MCF 10A (cell line): ENCODE measurements at regions of chr6 and their contacts with region 1.

Region 1: GRCh38 chr6:35731736-35732532 is 4.9 kb upstream of the ARMC12 start:
- DNase-seq: peak; percentile 97
- H3K4me3 Mint-ChIP-seq: peak overlapping the region; percentile 73
- H3K27ac Mint-ChIP-seq: peak overlapping the region; percentile 81
- H3K4me1 Mint-ChIP-seq: peaks cover 55% of the 10 kb centered on the region
- H3K27me3 Mint-ChIP-seq: no peaks in the 10 kb centered on the region
- CTCF ChIP-seq: no peak

Region 2: DNA sequence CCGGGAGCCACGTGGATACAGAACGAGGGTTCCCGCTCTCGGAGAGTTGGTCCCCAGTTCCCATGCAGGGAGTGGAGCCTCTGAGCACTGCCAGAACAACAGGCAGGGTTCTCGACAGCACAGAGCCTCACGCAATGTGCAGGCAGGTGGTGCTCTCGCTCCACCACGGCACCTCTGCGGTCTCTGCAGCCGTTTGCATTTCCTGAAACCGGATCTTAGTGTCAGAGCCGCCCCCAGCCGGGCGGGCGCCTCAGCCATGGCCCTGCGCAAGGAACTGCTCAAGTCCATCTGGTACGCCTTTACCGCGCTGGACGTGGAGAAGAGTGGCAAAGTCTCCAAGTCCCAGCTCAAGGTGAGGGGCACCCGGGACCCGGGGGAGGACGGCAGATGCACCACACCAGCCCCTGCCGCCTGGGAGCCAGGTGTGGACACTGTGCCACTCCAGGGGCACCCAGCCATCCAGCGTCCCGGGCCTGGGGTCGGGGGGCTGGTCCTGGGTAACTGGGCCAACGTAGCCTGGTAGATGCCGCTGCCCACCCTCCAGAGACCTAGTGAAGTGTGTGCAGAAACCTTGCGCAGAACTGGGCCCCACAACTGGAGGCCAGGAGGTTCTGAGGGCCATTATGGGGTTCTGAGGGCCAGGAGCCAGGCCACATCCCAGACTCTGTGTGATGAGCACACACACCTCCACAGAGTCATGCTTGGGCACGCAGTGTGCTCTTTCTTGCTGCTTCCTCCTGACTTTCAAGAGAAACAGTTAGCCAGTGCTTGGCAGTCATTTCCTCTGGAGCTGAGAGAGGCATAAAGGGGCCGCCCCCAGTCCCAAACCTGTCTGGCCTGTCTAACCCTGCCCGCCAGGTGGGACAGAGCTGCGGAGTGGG is 434.1 kb before region 1 on chr6 and contains the start of gene DEF6:
- CTCF ChIA-PET with region 1: interaction called, 4 read pairs
- POLR2A ChIA-PET with region 1: no interaction called
- intact Hi-C with region 1: loop called (anchors 2 kb)
- DNase-seq: peak; percentile 91
- H3K4me3 Mint-ChIP-seq: peak within 1 kb of the TSS; percentile 69
- H3K27ac Mint-ChIP-seq: peak within 1 kb of the TSS; percentile 23
- H3K4me1 Mint-ChIP-seq: peaks cover 14% of the 10 kb centered on the region
- H3K27me3 Mint-ChIP-seq: no peaks in the 10 kb centered on the region
- CTCF ChIP-seq: peak; percentile 85
- total RNA-seq, gene DEF6: 17.8 and 23.1 TPM in 2 replicates

Region 3: GRCh38 chr6:35569011-35569461 is 162.9 kb before region 1 on chr6:
- CTCF ChIA-PET with region 1: interaction called, 12 read pairs
- POLR2A ChIA-PET with region 1: interaction called, 58 read pairs
- intact Hi-C with region 1: loop called (anchors 5 kb)
- DNase-seq: peak; percentile 66
- H3K4me3 Mint-ChIP-seq: no peak overlapping the region
- H3K27ac Mint-ChIP-seq: no peak overlapping the region
- H3K4me1 Mint-ChIP-seq: no peaks in the 10 kb centered on the region
- H3K27me3 Mint-ChIP-seq: no peaks in the 10 kb centered on the region
- CTCF ChIP-seq: peak; percentile 38

Region 4: GRCh38 chr6:35601331-35602132 is 130.4 kb before region 1 on chr6:
- CTCF ChIA-PET with region 1: interaction called, 7 read pairs
- POLR2A ChIA-PET with region 1: interaction called, 294 read pairs
- intact Hi-C with region 1: no loop called
- DNase-seq: peak; percentile 92
- H3K4me3 Mint-ChIP-seq: peak overlapping the region; percentile 58
- H3K27ac Mint-ChIP-seq: peak overlapping the region; percentile 96
- H3K4me1 Mint-ChIP-seq: peaks cover 63% of the 10 kb centered on the region
- H3K27me3 Mint-ChIP-seq: no peaks in the 10 kb centered on the region
- CTCF ChIP-seq: no peak

Region 5: DNA sequence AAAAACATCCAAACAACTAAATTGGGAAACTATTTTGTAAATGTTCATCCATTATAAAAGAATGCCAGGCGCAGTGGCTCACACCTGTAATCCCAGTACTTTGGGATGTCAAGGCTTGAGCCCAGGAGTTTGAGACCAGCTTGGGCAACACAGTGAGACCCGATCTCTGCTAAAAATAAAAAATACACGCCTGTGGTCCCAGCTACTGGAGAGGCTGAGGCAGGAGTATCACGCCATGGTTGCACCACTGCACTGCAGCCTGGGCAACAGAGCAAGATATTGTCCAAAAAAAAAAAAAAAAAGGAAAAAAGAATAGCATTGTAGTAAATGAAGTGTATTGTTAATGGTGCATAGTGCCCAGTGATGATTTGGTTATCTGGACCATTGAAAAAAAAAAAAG is 81.9 kb before region 1 on chr6:
- CTCF ChIA-PET with region 1: interaction called, 9 read pairs
- POLR2A ChIA-PET with region 1: interaction called, 37 read pairs
- intact Hi-C with region 1: no loop called
- DNase-seq: no peak
- H3K4me3 Mint-ChIP-seq: no peak overlapping the region
- H3K27ac Mint-ChIP-seq: no peak overlapping the region
- H3K4me1 Mint-ChIP-seq: peaks cover 27% of the 10 kb centered on the region
- H3K27me3 Mint-ChIP-seq: no peaks in the 10 kb centered on the region
- CTCF ChIP-seq: no peak

Region 6: DNA sequence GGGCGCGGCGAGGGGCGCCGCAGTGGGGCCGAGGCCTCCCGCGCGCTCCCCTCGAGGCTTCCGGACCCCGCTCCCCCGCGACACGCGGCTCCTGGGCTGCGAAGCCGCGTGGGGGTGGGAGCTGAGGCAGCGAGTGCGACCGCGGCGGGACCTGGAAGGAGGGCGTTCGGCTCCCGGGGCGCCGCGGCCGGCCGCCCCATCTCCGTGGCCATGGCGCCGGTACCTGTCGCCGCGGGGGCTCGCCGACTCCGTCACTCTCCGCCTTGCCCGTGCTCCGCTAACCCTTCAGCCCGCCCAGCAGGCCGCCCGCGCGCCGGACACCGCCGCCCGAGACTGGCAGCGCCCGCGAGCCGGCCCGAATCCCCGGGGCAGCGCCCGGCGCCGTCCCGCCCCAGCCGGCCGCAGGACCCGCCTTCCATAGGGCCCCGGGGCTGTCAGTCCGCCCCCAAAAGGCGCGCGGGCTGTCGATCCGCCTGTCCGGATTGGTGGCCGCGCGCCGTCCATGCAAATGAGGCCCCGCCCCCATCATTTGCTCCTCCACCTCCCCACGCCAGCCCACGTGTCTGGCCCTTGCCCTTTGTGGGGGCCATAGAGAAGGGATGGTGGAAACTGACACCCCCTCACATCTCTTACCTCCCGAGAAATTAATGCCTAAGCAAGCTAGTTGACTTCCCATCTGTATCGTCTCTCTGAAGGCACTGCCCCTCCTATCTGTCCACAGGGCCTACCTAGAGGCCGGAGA is 43.2 kb before region 1 on chr6 and contains the start of gene FKBP5:
- CTCF ChIA-PET with region 1: interaction called, 18 read pairs
- POLR2A ChIA-PET with region 1: interaction called, 1,351 read pairs
- intact Hi-C with region 1: loop called (anchors 1 kb)
- DNase-seq: peak; percentile 91
- H3K4me3 Mint-ChIP-seq: peak within 1 kb of the TSS; percentile 97
- H3K27ac Mint-ChIP-seq: peak within 1 kb of the TSS; percentile 95
- H3K4me1 Mint-ChIP-seq: peaks cover 21% of the 10 kb centered on the region
- H3K27me3 Mint-ChIP-seq: no peaks in the 10 kb centered on the region
- CTCF ChIP-seq: no peak
- total RNA-seq, gene FKBP5: 304 and 387 TPM in 2 replicates

Region 7: GRCh38 chr6:35742797-35743196 is 10.9 kb after region 1 on chr6:
- CTCF ChIA-PET with region 1: no interaction called
- POLR2A ChIA-PET with region 1: no interaction called
- intact Hi-C with region 1: no loop called
- DNase-seq: no peak
- H3K4me3 Mint-ChIP-seq: no peak overlapping the region
- H3K27ac Mint-ChIP-seq: no peak overlapping the region
- H3K4me1 Mint-ChIP-seq: no peaks in the 10 kb centered on the region
- H3K27me3 Mint-ChIP-seq: no peaks in the 10 kb centered on the region
- CTCF ChIP-seq: no peak